ENCODE measurements at regions of chr5 and their contacts with region 1.

Region 1: GRCh38 chr5:151157426-151158286 is at the start of gene ANXA6:
- DNase-seq: peak; percentile 29 to 85 (median 56)
- ATAC-seq: peak; percentile 65
- H3K4me3 ChIP-seq: peak within 1 kb of the TSS; percentile 99
- H3K4me3 Mint-ChIP-seq: peak within 1 kb of the TSS; percentile 99
- H3K27ac ChIP-seq: peak within 1 kb of the TSS; percentile 89 to 91
- H3K27ac Mint-ChIP-seq: peak within 1 kb of the TSS; percentile 91
- H3K4me1 ChIP-seq: peaks cover 57% of the 10 kb centered on the region
- H3K4me1 Mint-ChIP-seq: peaks cover 79% of the 10 kb centered on the region
- H3K27me3 ChIP-seq: no peaks in the 10 kb centered on the region
- H3K27me3 Mint-ChIP-seq: no peaks in the 10 kb centered on the region
- CTCF ChIP-seq: no peak
- total RNA-seq, gene ANXA6: 108 to 130 TPM

Region 2: DNA sequence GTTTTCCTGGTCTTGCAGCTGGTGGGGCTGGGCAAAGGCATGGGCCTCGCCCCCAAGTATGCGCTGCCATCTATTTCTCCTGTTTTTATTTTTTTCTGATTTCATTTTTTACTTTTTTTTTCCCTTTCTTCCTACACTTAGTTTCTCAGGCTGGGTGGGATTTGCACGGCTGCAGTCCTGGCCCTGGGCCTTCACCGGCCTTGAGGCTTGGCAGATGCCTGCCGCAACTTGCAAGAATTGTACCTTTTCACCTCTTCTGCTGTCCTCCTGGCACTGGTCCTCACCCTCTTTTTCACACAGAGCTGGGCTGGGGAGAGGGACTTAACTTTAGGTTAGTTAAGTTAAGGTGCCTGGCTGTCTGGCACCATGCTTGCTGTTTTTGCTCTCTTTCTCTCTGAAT is 321.6 kb before region 1 on chr5:
- CTCF ChIA-PET with region 1: no interaction called
- POLR2A ChIA-PET with region 1: no interaction called
- intact Hi-C with region 1: no loop called
- DNase-seq: no peak
- ATAC-seq: no peak
- H3K4me3 ChIP-seq: no peak overlapping the region
- H3K4me3 Mint-ChIP-seq: no peak overlapping the region
- H3K27ac ChIP-seq: no peak overlapping the region
- H3K27ac Mint-ChIP-seq: no peak overlapping the region
- H3K4me1 ChIP-seq: no peaks in the 10 kb centered on the region
- H3K4me1 Mint-ChIP-seq: no peaks in the 10 kb centered on the region
- H3K27me3 ChIP-seq: peaks cover 0 to 4% of the 10 kb centered on the region in 2 experiments
- H3K27me3 Mint-ChIP-seq: peaks cover 1% of the 10 kb centered on the region
- CTCF ChIP-seq: no peak

Region 3: GRCh38 chr5:151051066-151051930 is 106.4 kb before region 1 on chr5:
- CTCF ChIA-PET with region 1: no interaction called
- POLR2A ChIA-PET with region 1: no interaction called
- intact Hi-C with region 1: loop called in 1 of 2 experiments (anchors 1 kb)
- DNase-seq: peak; percentile 58 to 85 (median 65)
- ATAC-seq: peak; percentile 77
- H3K4me3 ChIP-seq: no peak overlapping the region
- H3K4me3 Mint-ChIP-seq: no peak overlapping the region
- H3K27ac ChIP-seq: no peak overlapping the region
- H3K27ac Mint-ChIP-seq: peak overlapping the region; percentile 41
- H3K4me1 ChIP-seq: peaks cover 7% of the 10 kb centered on the region
- H3K4me1 Mint-ChIP-seq: peaks cover 12% of the 10 kb centered on the region
- H3K27me3 ChIP-seq: no peaks in the 10 kb centered on the region
- H3K27me3 Mint-ChIP-seq: no peaks in the 10 kb centered on the region
- CTCF ChIP-seq: peak; percentile 74

Region 4: GRCh38 chr5:151126199-151126645 is 31.4 kb before region 1 on chr5:
- CTCF ChIA-PET with region 1: interaction called, 151 read pairs
- POLR2A ChIA-PET with region 1: interaction called, 97 read pairs
- intact Hi-C with region 1: no loop called
- DNase-seq: peak; percentile 42 to 84 (median 62)
- ATAC-seq: peak; percentile 61
- H3K4me3 ChIP-seq: no peak overlapping the region
- H3K4me3 Mint-ChIP-seq: no peak overlapping the region
- H3K27ac ChIP-seq: peak overlapping the region in 1 of 2 donors; percentile 50
- H3K27ac Mint-ChIP-seq: peak overlapping the region; percentile 91
- H3K4me1 ChIP-seq: peaks cover 53% of the 10 kb centered on the region
- H3K4me1 Mint-ChIP-seq: peaks cover 71% of the 10 kb centered on the region
- H3K27me3 ChIP-seq: no peaks in the 10 kb centered on the region
- H3K27me3 Mint-ChIP-seq: no peaks in the 10 kb centered on the region
- CTCF ChIP-seq: peak; percentile 90

Region 5: DNA sequence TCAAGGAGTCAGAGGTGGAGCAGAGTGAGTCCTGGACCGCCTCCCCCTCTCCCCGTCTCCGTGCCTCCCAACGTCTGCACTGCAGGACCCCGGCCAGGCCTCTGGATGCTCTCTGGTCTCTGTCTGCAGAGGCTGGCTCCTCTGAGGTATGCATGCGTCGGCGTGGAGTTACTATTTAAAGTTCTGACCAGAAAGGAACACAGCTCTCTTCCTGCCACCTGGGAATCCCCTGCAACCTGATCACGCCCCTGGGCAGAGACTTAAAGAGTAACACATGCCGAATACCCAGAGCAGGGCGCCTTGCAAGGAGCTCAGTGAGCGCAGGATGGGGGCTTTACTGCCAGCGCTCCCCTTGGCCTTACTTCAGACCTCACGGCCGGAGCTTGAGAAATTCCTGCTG is 16.1 kb before region 1 on chr5:
- CTCF ChIA-PET with region 1: interaction called, 7 read pairs
- POLR2A ChIA-PET with region 1: interaction called, 71 read pairs
- intact Hi-C with region 1: loop called (anchors 2 kb)
- DNase-seq: peak in 13 of 14 experiments; percentile 34 to 82 (median 50)
- ATAC-seq: peak; percentile 79
- H3K4me3 ChIP-seq: peak overlapping the region; percentile 24
- H3K4me3 Mint-ChIP-seq: peak overlapping the region; percentile 80
- H3K27ac ChIP-seq: peak overlapping the region; percentile 49 to 54
- H3K27ac Mint-ChIP-seq: peak overlapping the region; percentile 91
- H3K4me1 ChIP-seq: peaks cover 95% of the 10 kb centered on the region
- H3K4me1 Mint-ChIP-seq: peaks cover 94% of the 10 kb centered on the region
- H3K27me3 ChIP-seq: no peaks in the 10 kb centered on the region
- H3K27me3 Mint-ChIP-seq: no peaks in the 10 kb centered on the region
- CTCF ChIP-seq: no peak

Region 6: DNA sequence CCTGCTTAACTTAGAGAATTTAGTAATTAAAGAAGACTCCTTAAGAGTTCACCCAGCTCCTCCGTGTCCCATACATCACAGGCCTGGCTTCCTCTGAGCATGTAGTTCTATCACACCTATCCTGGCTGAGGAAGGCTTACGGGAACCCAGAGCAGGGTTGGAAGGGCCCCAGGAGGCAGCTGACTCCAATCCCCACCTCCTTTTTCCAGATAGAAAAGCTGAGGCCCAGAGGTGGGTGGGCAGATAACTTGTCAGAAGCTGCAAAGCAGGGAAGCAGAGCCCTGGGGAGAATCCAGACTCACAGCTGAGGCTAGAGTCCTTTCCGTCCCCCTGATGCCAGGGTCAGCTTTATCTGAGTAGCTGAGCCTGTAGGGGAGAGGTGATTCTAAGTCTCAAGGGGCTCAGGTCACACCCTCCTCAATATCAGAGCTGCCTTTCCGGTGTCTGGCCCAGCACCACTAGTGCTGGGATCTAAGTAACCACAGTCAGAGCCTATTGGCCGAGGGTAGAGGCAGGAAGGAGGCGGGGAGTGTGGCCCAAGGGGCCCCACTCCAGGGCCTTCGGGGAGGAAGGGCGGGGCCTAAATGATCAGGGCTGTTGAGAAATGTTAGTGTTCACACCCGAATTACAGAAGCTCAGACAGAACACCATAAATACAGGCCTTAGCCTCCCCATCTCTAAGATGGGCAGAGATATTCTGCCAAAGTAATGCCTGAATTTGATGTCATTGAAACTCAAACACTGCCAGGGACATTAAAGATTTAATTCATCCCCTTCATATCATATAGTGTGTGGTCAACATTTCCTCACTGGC is 56.4 kb after region 1 on chr5:
- CTCF ChIA-PET with region 1: no interaction called
- POLR2A ChIA-PET with region 1: interaction called, 5 read pairs
- intact Hi-C with region 1: loop called in 1 of 2 experiments (anchors 5 kb)
- DNase-seq: peak; percentile 66 to 94 (median 86)
- ATAC-seq: peak; percentile 81
- H3K4me3 ChIP-seq: peak overlapping the region; percentile 55
- H3K4me3 Mint-ChIP-seq: peak overlapping the region; percentile 89
- H3K27ac ChIP-seq: peak overlapping the region; percentile 92 to 97
- H3K27ac Mint-ChIP-seq: peak overlapping the region; percentile 94
- H3K4me1 ChIP-seq: peaks cover 99% of the 10 kb centered on the region
- H3K4me1 Mint-ChIP-seq: peaks cover 94% of the 10 kb centered on the region
- H3K27me3 ChIP-seq: no peaks in the 10 kb centered on the region
- H3K27me3 Mint-ChIP-seq: no peaks in the 10 kb centered on the region
- CTCF ChIP-seq: no peak

Region 7: DNA sequence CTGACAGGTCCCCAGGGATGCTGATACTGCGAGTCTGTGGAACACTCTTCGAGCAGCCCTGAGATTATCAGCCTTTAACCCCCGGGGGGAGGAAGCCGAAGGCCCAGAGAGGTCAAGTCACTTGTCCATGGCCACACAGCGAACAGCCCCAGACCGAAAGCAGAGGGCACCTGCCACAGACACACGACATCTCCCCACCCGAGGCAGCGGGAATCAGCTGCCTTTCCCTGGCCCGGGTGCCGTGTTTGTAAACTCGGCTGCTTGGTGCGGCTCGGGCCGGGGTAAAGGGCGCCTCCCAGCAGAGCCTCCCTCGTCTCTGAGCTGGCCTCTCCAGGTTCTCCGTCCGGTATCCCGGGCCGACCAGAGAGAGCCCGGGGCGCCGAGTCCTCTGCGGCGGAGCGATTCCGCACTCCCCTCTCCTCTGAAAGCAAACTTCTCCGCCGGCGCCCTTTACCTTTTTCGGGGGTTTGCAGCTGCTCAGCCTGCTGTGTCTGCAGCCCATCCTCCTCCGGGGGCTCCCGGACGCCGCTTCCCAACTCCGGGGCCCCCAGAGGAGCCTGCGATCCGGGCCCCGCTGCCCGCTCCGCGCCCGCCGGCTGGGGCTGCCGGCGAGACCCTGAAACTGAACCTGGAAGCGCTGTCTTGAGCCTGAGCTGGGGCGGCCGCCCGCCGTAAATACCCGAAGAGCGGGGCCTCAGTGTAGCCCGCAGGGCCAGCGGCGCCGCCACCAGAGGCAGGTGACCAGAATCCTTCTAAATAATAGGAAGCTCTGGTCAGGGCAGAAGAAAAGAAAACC is 66.0 kb after region 1 on chr5 and contains the start of gene CCDC69:
- CTCF ChIA-PET with region 1: no interaction called
- POLR2A ChIA-PET with region 1: interaction called, 13 read pairs
- intact Hi-C with region 1: no loop called
- DNase-seq: peak in 12 of 14 experiments; percentile 16 to 73 (median 50)
- ATAC-seq: peak; percentile 40
- H3K4me3 ChIP-seq: peak within 1 kb of the TSS; percentile 98
- H3K4me3 Mint-ChIP-seq: peak within 1 kb of the TSS; percentile 92
- H3K27ac ChIP-seq: peak within 1 kb of the TSS; percentile 92 to 94
- H3K27ac Mint-ChIP-seq: peak within 1 kb of the TSS; percentile 94
- H3K4me1 ChIP-seq: peaks cover 64% of the 10 kb centered on the region
- H3K4me1 Mint-ChIP-seq: peaks cover 63% of the 10 kb centered on the region
- H3K27me3 ChIP-seq: no peaks in the 10 kb centered on the region
- H3K27me3 Mint-ChIP-seq: no peaks in the 10 kb centered on the region
- CTCF ChIP-seq: no peak
- total RNA-seq, gene CCDC69: 68.0 to 68.9 TPM